ENCODE measurements at regions of chr2 and their contacts with region 1.

Region 1: GRCh38 chr2:105744909-105745853 is at the start of gene NCK2:
- DNase-seq: peak; percentile 64
- ATAC-seq: peak; percentile 5
- H3K4me3 Mint-ChIP-seq: peak within 1 kb of the TSS; percentile 93
- H3K27ac Mint-ChIP-seq: peak within 1 kb of the TSS; percentile 93
- H3K4me1 Mint-ChIP-seq: peaks cover 63% of the 10 kb centered on the region
- H3K27me3 Mint-ChIP-seq: no peaks in the 10 kb centered on the region
- total RNA-seq, gene NCK2: 69.6 to 70.0 TPM

Region 2: DNA sequence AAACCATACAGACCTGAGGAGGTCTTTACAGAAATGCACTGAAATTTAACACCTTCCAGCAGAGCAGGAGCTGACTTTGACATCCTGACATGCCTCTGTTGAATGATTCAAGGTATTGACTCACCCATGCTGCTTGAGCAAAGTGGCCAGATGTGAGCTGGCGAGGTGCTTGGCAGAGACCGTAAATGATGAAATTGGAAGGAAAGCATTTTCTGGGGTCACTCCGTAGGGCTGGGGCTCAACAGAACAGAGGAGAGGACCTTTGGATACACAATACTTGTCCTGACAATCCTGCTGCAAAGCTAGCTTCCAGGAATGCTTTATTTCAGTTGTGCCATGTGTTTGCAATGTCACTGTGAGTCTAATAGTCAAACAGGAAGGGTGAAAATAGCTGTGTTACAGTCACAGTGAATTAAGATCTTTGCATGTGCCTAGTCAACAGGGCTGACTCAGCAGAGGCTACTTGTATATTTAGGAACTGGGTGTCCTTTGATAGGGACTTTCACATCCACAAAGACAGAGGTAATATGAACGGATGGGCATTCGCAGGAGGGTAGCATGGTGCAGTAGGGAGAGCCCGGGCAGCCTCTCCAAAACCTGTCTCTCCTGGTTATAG is 32.1 kb before region 1 on chr2:
- POLR2A ChIA-PET with region 1: no interaction called
- DNase-seq: no peak
- ATAC-seq: no peak
- H3K4me3 Mint-ChIP-seq: no peak overlapping the region
- H3K27ac Mint-ChIP-seq: no peak overlapping the region
- H3K4me1 Mint-ChIP-seq: peaks cover 2% of the 10 kb centered on the region
- H3K27me3 Mint-ChIP-seq: peaks cover under 1% of the 10 kb centered on the region

Region 3: GRCh38 chr2:105765415-105766299 is 20.5 kb after region 1 on chr2:
- POLR2A ChIA-PET with region 1: interaction called, 11 read pairs
- DNase-seq: no peak
- ATAC-seq: peak; percentile 41
- H3K4me3 Mint-ChIP-seq: no peak overlapping the region
- H3K27ac Mint-ChIP-seq: peak overlapping the region; percentile 81
- H3K4me1 Mint-ChIP-seq: peaks cover 68% of the 10 kb centered on the region
- H3K27me3 Mint-ChIP-seq: no peaks in the 10 kb centered on the region

Region 4: DNA sequence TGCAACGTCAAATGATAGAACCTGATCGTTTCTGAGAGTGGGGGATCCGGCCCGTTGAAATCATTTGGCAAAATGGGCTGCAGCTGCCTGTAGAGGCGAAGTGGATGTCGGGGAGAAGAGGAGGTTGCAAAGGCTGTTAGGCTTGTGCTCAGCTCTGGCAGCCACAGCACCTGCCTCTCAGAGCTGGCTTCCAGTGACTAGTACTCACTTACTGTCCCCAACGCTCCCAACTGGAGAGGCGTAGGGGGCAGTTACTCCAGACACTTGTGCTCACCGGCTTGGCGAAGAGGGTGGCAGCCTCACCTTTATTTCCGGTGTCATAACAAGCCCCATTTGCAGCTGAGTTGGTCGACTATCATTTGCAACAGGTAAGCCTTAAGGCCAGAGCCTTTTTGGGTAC is 37.5 kb after region 1 on chr2:
- POLR2A ChIA-PET with region 1: interaction called, 30 read pairs
- DNase-seq: no peak
- ATAC-seq: no peak
- H3K4me3 Mint-ChIP-seq: peak overlapping the region; percentile 37
- H3K27ac Mint-ChIP-seq: peak overlapping the region; percentile 71
- H3K4me1 Mint-ChIP-seq: peaks cover 78% of the 10 kb centered on the region
- H3K27me3 Mint-ChIP-seq: no peaks in the 10 kb centered on the region

Region 5: GRCh38 chr2:105797298-105797819 is 52.2 kb after region 1 on chr2:
- POLR2A ChIA-PET with region 1: interaction called, 14 read pairs
- DNase-seq: peak; percentile 72
- ATAC-seq: peak; percentile 48
- H3K4me3 Mint-ChIP-seq: peak overlapping the region; percentile 88
- H3K27ac Mint-ChIP-seq: peak overlapping the region; percentile 99
- H3K4me1 Mint-ChIP-seq: peaks cover 84% of the 10 kb centered on the region
- H3K27me3 Mint-ChIP-seq: no peaks in the 10 kb centered on the region